Naive thymus-derived CD8-positive, alpha-beta T cell (primary cell): ENCODE measurements at regions of chr13 and their contacts with region 1.

Region 1: DNA sequence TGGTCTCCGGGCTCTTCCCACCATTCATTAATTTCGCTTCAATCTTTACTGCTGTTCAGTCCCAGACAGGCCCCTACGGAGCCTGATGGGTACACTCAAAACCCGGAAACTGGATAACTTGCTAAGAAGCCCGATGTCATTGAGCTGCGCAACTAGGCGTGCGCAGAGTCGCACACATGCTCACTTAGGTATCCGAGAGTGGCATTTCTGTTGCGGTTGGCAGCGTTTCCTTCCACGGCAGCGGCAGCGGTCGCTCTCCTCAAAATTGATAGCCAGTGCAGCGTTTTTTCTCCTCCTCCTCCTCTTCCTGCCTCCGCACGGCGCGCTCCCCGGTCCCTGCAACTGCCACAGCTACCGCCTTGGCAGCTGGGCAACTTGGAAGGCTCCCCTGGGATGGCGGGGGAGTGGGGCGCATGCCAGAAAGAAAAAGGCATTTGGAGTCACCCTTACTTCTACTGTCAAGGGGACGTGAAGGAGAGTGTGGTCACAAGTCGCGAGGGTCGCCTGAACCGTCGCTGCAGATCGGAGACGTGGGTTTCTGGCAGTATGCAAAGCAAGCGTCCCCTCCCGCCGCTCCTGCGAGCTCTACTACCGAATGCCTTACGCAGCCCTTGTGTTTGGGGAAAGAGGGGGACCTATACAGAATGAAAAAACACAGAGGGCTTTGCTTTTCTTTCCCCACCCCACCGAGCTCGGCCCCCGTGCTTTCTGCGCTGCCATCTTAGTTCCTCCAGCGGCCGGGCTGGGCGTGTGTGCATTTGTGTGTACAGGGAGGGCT is 2.4 kb upstream of the MYCBP2 start:
- DNase-seq: peak; percentile 70 to 96 (median 89)
- ATAC-seq: peak; percentile 57 to 64
- H3K4me3 Mint-ChIP-seq: peak overlapping the region; percentile 86 to 99 (median 97)
- H3K27ac Mint-ChIP-seq: peak overlapping the region; percentile 88 to 98 (median 95)
- H3K4me1 Mint-ChIP-seq: peaks cover 23 to 61% (median 48%) of the 10 kb centered on the region in 4 donors
- H3K27me3 Mint-ChIP-seq: peaks cover 0 to 3% (median 0%) of the 10 kb centered on the region in 5 donors

Region 2: GRCh38 chr13:76886292-76887075 is 442.8 kb before region 1 on chr13 and contains the start of gene KCTD12:
- POLR2A ChIA-PET with region 1: interaction called, 13 read pairs
- DNase-seq: peak; percentile 65 to 94 (median 82)
- ATAC-seq: peak; percentile 78 to 80
- H3K4me3 Mint-ChIP-seq: peak within 1 kb of the TSS; percentile 85 to 93 (median 91)
- H3K27ac Mint-ChIP-seq: peak within 1 kb of the TSS; percentile 65 to 92 (median 87)
- H3K4me1 Mint-ChIP-seq: peaks cover 12 to 42% (median 33%) of the 10 kb centered on the region in 4 donors
- H3K27me3 Mint-ChIP-seq: peaks cover 0 to 11% (median 0%) of the 10 kb centered on the region in 5 donors
- polyA plus RNA-seq, gene KCTD12: 0.29 to 0.58 (median 0.43) TPM

Region 3: GRCh38 chr13:76991796-76992547 is 337.4 kb before region 1 on chr13 and contains the start of gene CLN5:
- POLR2A ChIA-PET with region 1: interaction called, 10 read pairs
- DNase-seq: peak; percentile 89 to 98 (median 96)
- ATAC-seq: peak; percentile 89 to 90
- H3K4me3 Mint-ChIP-seq: peak within 1 kb of the TSS; percentile 88 to 99 (median 96)
- H3K27ac Mint-ChIP-seq: peak within 1 kb of the TSS; percentile 97 to 100 (median 100)
- H3K4me1 Mint-ChIP-seq: peaks cover 22 to 54% (median 51%) of the 10 kb centered on the region in 4 donors
- H3K27me3 Mint-ChIP-seq: peaks cover 0 to 7% (median 0%) of the 10 kb centered on the region in 5 donors
- polyA plus RNA-seq, gene CLN5: 16.9 to 30.8 (median 25.8) TPM

Region 4: GRCh38 chr13:77026818-77027585 is 302.3 kb before region 1 on chr13 and contains the start of gene FBXL3:
- POLR2A ChIA-PET with region 1: interaction called, 22 read pairs
- DNase-seq: peak; percentile 77 to 91 (median 81)
- ATAC-seq: peak; percentile 72 to 75
- H3K4me3 Mint-ChIP-seq: peak within 1 kb of the TSS; percentile 90 to 99 (median 98)
- H3K27ac Mint-ChIP-seq: peak within 1 kb of the TSS; percentile 94 to 99 (median 96)
- H3K4me1 Mint-ChIP-seq: peaks cover 32 to 59% (median 49%) of the 10 kb centered on the region in 4 donors
- H3K27me3 Mint-ChIP-seq: peaks cover 0 to 2% (median 0%) of the 10 kb centered on the region in 5 donors
- polyA plus RNA-seq, gene FBXL3: 29.3 to 44.7 (median 32.6) TPM

Region 5: GRCh38 chr13:77356155-77356554 is 26.8 kb after region 1 on chr13:
- POLR2A ChIA-PET with region 1: no interaction called
- DNase-seq: no peak
- ATAC-seq: no peak
- H3K4me3 Mint-ChIP-seq: no peak overlapping the region
- H3K27ac Mint-ChIP-seq: peak overlapping the region in 1 of 10 donors; percentile 73
- H3K4me1 Mint-ChIP-seq: peaks cover 6 to 28% (median 14%) of the 10 kb centered on the region in 4 donors
- H3K27me3 Mint-ChIP-seq: peaks cover 0 to under 1% (median 0%) of the 10 kb centered on the region in 5 donors

Region 6: DNA sequence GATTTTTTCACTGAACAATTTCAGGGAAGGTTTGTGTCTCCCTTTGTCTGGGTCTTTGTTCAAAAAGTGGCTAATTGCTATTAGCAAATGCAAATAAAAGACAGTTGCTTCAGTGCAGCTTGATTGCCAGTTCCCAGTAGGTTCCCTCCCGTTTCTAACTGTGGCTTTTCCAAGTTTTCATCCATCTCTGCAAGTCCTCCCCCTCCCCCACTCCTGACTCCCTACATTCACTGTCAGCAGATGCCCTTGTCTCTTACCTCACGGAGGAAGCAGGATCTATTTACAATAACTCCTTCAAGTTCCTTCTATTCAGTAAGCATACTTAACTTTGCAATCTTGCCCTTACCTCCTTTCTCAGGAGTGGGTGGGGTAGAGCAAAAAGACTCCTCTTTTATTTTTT is 150.7 kb after region 1 on chr13:
- POLR2A ChIA-PET with region 1: interaction called, 31 read pairs
- DNase-seq: no peak
- ATAC-seq: no peak
- H3K4me3 Mint-ChIP-seq: no peak overlapping the region
- H3K27ac Mint-ChIP-seq: no peak overlapping the region
- H3K4me1 Mint-ChIP-seq: peaks cover 0 to 10% (median 7%) of the 10 kb centered on the region in 4 donors
- H3K27me3 Mint-ChIP-seq: no peaks in the 10 kb centered on the region

Region 7: DNA sequence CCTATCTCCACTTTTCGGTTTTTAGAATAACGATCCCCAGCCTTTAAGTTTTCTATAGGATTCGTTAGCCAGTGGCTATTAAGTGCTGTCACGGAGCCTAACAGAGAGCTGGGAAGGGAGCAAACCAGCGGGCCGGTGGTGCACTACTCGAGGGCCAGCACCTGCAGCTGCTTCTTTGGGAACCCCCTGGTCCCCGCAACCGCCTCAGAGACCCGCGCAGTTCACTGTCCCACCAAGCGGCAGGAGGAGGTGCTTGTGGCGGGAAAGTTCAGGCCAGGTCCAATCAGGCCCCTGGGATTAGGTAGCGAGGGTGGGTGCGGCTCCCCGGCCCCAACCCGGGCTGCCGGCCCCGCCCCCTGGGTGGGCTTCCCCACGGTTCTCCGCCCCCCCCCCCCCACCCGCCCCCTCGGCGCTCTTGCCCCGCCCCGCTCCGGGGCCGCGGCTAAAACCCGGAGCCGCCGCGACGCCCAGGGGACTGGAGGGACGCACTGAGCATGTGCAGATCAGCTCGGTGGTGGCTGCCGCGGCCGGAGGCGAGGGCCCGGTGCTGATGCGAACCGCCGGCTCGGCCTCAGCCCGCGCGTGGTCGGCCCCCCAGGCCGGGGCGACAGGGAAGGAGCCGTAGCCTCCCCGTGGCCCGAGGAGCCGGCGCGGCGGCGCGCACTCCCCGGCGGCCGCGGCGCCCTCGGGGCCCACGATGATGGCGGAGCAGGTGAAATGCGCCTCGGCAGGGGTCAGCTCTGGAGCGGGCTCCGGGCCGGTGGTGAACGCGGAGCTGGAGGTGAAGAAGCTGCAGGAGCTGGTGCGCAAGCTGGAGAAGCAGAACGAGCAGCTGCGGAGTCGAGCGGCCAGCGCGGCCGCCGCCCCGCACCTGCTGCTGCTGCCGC is 368.1 kb after region 1 on chr13 and contains the start of gene SLAIN1:
- POLR2A ChIA-PET with region 1: interaction called, 16 read pairs
- DNase-seq: peak; percentile 81 to 94 (median 87)
- ATAC-seq: peak; percentile 80 to 85
- H3K4me3 Mint-ChIP-seq: peak within 1 kb of the TSS; percentile 92 to 100 (median 98)
- H3K27ac Mint-ChIP-seq: peak within 1 kb of the TSS; percentile 69 to 97 (median 91)
- H3K4me1 Mint-ChIP-seq: peaks cover 10 to 51% (median 39%) of the 10 kb centered on the region in 4 donors
- H3K27me3 Mint-ChIP-seq: no peaks in the 10 kb centered on the region
- polyA plus RNA-seq, gene SLAIN1: 25.8 to 51.7 (median 48.4) TPM